ENCODE measurements at regions of chr20 and their contacts with region 1.

Region 1: GRCh38 chr20:45347936-45348778 is at the start of gene SDC4:
- DNase-seq: peak; percentile 76 to 87 (median 86)
- ATAC-seq: peak; percentile 84
- H3K4me3 ChIP-seq: peak within 1 kb of the TSS; percentile 54
- H3K27ac ChIP-seq: peak within 1 kb of the TSS; percentile 67
- H3K4me1 ChIP-seq: peaks cover 27 to 41% of the 10 kb centered on the region in 2 experiments
- H3K27me3 ChIP-seq: no peaks in the 10 kb centered on the region
- CTCF ChIP-seq: no peak
- EP300 ChIP-seq: no peak
- POLR2A ChIP-seq: peak; percentile 95
- RAD21 ChIP-seq: no peak
- polyA plus RNA-seq, gene SDC4: 2.1 to 4.2 TPM

Region 2: GRCh38 chr20:45337367-45338120 is 10.6 kb before region 1 on chr20:
- CTCF ChIA-PET with region 1: no interaction called
- POLR2A ChIA-PET with region 1: interaction called, 32 read pairs
- in situ Hi-C with region 1: no loop called
- intact Hi-C with region 1: no loop called
- DNase-seq: peak; percentile 61 to 87 (median 73)
- ATAC-seq: peak; percentile 88
- H3K4me3 ChIP-seq: no peak overlapping the region
- H3K27ac ChIP-seq: peak overlapping the region; percentile 58
- H3K4me1 ChIP-seq: peaks cover 51 to 53% of the 10 kb centered on the region in 2 experiments
- H3K27me3 ChIP-seq: no peaks in the 10 kb centered on the region
- CTCF ChIP-seq: no peak
- EP300 ChIP-seq: peak; percentile 74
- POLR2A ChIP-seq: no peak
- RAD21 ChIP-seq: 0 out of 4 replicates have a peak, but pooled peaks of 1 of the 2 experiments have one; percentile 8